ENCODE measurements at regions of chr3 and their contacts with region 1.

Region 1: GRCh38 chr3:44198284-44199269 is 43.1 kb upstream of the TOPAZ1 start:
- DNase-seq: peak; percentile 66
- ATAC-seq: peak; percentile 80 to 89

Region 2: GRCh38 chr3:43855674-43856299 is 342.8 kb before region 1 on chr3:
- intact Hi-C with region 1: loop called in 1 of 2 experiments (anchors 5 kb)
- DNase-seq: peak; percentile 63
- ATAC-seq: peak; percentile 90 to 94

Region 3: GRCh38 chr3:43998836-43999727 is 199.5 kb before region 1 on chr3:
- intact Hi-C with region 1: loop called in 1 of 2 experiments (anchors 10 kb)
- DNase-seq: no peak
- ATAC-seq: peak; percentile 66 to 73